ENCODE measurements at regions of chr9 and their contacts with region 1.

Region 1: GRCh38 chr9:2857564-2858198 is 13.8 kb upstream of the PUM3 start:
- DNase-seq: peak; percentile 37 to 64 (median 44)
- ATAC-seq: peak; percentile 86
- H3K4me3 ChIP-seq: no peak overlapping the region
- H3K27ac ChIP-seq: no peak overlapping the region
- H3K4me1 ChIP-seq: no peaks in the 10 kb centered on the region
- H3K27me3 ChIP-seq: peaks cover 0 to 5% of the 10 kb centered on the region in 2 experiments; a peak in 2 of 5 replicates
- CTCF ChIP-seq: peak; percentile 58 to 74 (median 66)
- EP300 ChIP-seq: no peak
- POLR2A ChIP-seq: no peak
- RAD21 ChIP-seq: peak; percentile 32 to 68

Region 2: GRCh38 chr9:2727966-2728613 is 129.6 kb before region 1 on chr9:
- CTCF ChIA-PET with region 1: no interaction called
- POLR2A ChIA-PET with region 1: no interaction called
- in situ Hi-C with region 1: no loop called
- intact Hi-C with region 1: no loop called
- DNase-seq: peak; percentile 19 to 61 (median 35)
- ATAC-seq: peak; percentile 96
- H3K4me3 ChIP-seq: no peak overlapping the region
- H3K27ac ChIP-seq: peak overlapping the region; percentile 17; the same call in 1 of the 3 replicates
- H3K4me1 ChIP-seq: peaks cover 0 to 4% of the 10 kb centered on the region in 2 experiments; a peak in 2 of 5 replicates
- H3K27me3 ChIP-seq: no peaks in the 10 kb centered on the region
- CTCF ChIP-seq: peak; percentile 76 to 94 (median 91)
- EP300 ChIP-seq: no peak
- POLR2A ChIP-seq: no peak
- RAD21 ChIP-seq: peak; percentile 74 to 77

Region 3: DNA sequence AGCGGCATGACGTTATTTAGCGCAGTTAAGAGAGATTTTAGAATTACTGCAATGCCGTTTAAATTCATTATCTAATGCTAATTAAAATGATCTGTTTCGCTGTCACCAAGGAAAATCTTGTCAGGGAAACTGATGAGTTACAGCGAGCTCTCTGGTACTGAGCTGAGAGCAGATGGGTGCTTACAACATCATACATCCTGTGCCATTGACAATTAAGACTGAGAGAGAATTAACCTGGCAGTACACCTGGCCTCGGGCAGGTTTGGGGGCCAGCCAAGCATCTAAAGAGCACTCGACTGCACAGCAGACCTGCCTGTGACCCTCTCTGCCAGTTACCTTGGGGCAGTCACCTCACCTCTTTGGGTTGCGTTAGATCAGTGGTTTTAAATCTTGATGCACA is 68.8 kb before region 1 on chr9:
- CTCF ChIA-PET with region 1: no interaction called
- POLR2A ChIA-PET with region 1: no interaction called
- in situ Hi-C with region 1: no loop called
- intact Hi-C with region 1: no loop called
- DNase-seq: no peak
- ATAC-seq: no peak
- H3K4me3 ChIP-seq: no peak overlapping the region
- H3K27ac ChIP-seq: no peak overlapping the region
- H3K4me1 ChIP-seq: no peaks in the 10 kb centered on the region; a peak in 2 of 5 replicates
- H3K27me3 ChIP-seq: no peaks in the 10 kb centered on the region
- CTCF ChIP-seq: no peak
- EP300 ChIP-seq: no peak
- POLR2A ChIP-seq: no peak
- RAD21 ChIP-seq: no peak

Region 4: DNA sequence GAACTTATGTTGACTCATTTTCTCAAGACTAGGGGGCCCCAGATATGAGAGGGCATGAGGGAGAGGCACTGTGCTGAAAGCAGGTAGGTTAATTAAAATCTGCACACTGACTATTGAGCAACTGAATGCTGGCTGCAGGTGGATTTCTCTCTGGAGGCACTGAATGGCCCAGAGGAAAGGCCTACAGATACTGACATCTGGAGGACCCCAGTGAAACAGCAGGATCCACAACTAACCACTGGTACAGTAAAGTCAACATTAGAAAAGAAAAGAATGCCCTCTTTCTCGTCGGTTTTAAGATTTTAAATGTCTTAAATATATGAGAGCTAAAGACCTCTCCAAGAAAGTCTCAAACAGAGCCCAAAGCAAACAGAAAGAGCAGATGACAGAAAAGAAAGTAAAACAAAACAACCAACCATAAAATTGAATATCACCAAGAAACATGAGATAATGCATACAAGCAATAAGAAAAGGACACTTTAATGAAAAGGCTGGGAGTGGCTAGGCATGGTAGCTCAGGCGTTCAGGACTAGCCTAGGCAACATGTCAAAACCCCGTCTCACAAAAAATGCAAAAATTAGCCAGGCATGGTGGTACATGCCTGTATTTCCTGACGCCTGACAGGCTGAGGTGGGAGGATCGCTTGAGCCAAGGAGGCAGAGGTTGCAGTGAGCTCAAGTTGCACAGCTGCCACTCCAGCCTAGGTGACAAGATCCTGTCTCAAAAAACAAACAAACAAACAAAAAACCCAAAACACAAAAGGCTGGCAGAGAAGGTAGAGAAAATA is 57.1 kb before region 1 on chr9:
- CTCF ChIA-PET with region 1: no interaction called
- POLR2A ChIA-PET with region 1: no interaction called
- in situ Hi-C with region 1: no loop called
- intact Hi-C with region 1: no loop called
- DNase-seq: no peak
- ATAC-seq: no peak
- H3K4me3 ChIP-seq: no peak overlapping the region
- H3K27ac ChIP-seq: no peak overlapping the region
- H3K4me1 ChIP-seq: no peaks in the 10 kb centered on the region
- H3K27me3 ChIP-seq: no peaks in the 10 kb centered on the region
- CTCF ChIP-seq: peak in 1 of 3 experiments; percentile 16; a peak in 1 of 6 replicates
- EP300 ChIP-seq: no peak
- POLR2A ChIP-seq: no peak
- RAD21 ChIP-seq: no peak

Region 5: DNA sequence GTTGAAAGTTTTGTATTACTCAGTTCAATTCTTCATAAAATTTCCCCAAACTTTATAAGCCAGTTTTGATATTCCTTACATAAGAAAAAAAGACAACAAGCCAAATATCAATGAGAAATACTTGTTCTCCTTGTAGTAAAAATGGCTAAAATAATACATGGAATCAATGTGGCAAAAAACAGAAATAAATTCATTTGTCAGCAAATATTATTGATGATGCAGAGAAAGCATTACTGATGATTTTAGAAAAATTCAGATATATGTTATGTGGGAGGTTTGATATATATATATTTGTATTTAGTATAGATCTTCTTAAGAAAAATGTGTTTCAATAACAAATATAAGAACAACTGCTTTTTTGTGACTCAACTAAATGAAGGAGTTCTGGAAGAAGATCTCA is 113.2 kb after region 1 on chr9:
- CTCF ChIA-PET with region 1: no interaction called
- POLR2A ChIA-PET with region 1: no interaction called
- in situ Hi-C with region 1: no loop called
- intact Hi-C with region 1: no loop called
- DNase-seq: no peak
- ATAC-seq: no peak
- H3K4me3 ChIP-seq: no peak overlapping the region
- H3K27ac ChIP-seq: no peak overlapping the region
- H3K4me1 ChIP-seq: no peaks in the 10 kb centered on the region
- H3K27me3 ChIP-seq: no peaks in the 10 kb centered on the region
- CTCF ChIP-seq: no peak
- EP300 ChIP-seq: no peak
- POLR2A ChIP-seq: no peak
- RAD21 ChIP-seq: no peak

Region 6: GRCh38 chr9:3181049-3181953 is 323.6 kb after region 1 on chr9:
- CTCF ChIA-PET with region 1: interaction called, 3 read pairs
- POLR2A ChIA-PET with region 1: no interaction called
- in situ Hi-C with region 1: no loop called
- intact Hi-C with region 1: loop called (anchors 5 kb)
- DNase-seq: peak in 3 of 4 experiments; percentile 4 to 26 (median 7)
- ATAC-seq: peak; percentile 70
- H3K4me3 ChIP-seq: no peak overlapping the region
- H3K27ac ChIP-seq: no peak overlapping the region
- H3K4me1 ChIP-seq: peaks cover 0 to 9% of the 10 kb centered on the region in 2 experiments; a peak in 2 of 5 replicates
- H3K27me3 ChIP-seq: peaks cover 0 to 24% of the 10 kb centered on the region in 2 experiments; a peak in 3 of 5 replicates
- CTCF ChIP-seq: peak; percentile 29 to 39 (median 31); a peak in 3 of 6 replicates
- EP300 ChIP-seq: no peak
- POLR2A ChIP-seq: no peak
- RAD21 ChIP-seq: peak; percentile 21 to 38; a peak in 2 of 4 replicates

Region 7: GRCh38 chr9:3191715-3192114 is 334.0 kb after region 1 on chr9:
- CTCF ChIA-PET with region 1: no interaction called
- POLR2A ChIA-PET with region 1: no interaction called
- in situ Hi-C with region 1: loop called (anchors 10 kb)
- intact Hi-C with region 1: no loop called
- DNase-seq: no peak
- ATAC-seq: no peak
- H3K4me3 ChIP-seq: no peak overlapping the region
- H3K27ac ChIP-seq: no peak overlapping the region
- H3K4me1 ChIP-seq: no peaks in the 10 kb centered on the region
- H3K27me3 ChIP-seq: no peaks in the 10 kb centered on the region; a peak in 1 of 5 replicates
- CTCF ChIP-seq: no peak
- EP300 ChIP-seq: no peak
- POLR2A ChIP-seq: no peak
- RAD21 ChIP-seq: no peak

Region 8: DNA sequence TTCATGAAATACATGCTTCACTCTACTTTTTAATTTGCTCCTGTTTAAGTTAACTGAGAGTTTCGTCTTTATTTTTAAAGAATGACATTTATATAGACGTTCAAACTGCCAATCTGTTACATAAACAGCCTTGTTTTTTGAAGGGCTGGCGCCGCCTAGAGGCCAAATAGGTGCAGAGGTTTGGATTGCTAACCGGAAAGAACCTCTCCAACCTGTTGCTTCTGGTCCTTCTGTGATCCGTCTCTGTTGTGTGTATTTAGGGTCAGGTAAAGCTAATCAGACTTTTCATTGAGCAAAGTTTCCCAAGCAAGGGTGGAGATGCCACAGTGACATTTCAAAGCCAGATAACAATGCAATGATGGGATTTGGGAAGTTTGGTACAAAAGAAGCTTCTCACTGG is 1481.7 kb after region 1 on chr9:
- CTCF ChIA-PET with region 1: no interaction called
- POLR2A ChIA-PET with region 1: no interaction called
- in situ Hi-C with region 1: loop called (anchors 25 kb)
- intact Hi-C with region 1: no loop called
- DNase-seq: peak; percentile 23 to 46 (median 34)
- ATAC-seq: peak; percentile 63; the same call in 2 of the 3 replicates
- H3K4me3 ChIP-seq: no peak overlapping the region
- H3K27ac ChIP-seq: no peak overlapping the region
- H3K4me1 ChIP-seq: no peaks in the 10 kb centered on the region
- H3K27me3 ChIP-seq: no peaks in the 10 kb centered on the region
- CTCF ChIP-seq: peak; percentile 45 to 73 (median 59); a peak in 5 of 6 replicates
- EP300 ChIP-seq: no peak
- POLR2A ChIP-seq: no peak
- RAD21 ChIP-seq: peak in 1 of 2 experiments; percentile 33; a peak in 2 of 4 replicates

Measured in K562 (cell line).